ENCODE measurements at regions of chr19 and their contacts with region 1.

Region 1: DNA sequence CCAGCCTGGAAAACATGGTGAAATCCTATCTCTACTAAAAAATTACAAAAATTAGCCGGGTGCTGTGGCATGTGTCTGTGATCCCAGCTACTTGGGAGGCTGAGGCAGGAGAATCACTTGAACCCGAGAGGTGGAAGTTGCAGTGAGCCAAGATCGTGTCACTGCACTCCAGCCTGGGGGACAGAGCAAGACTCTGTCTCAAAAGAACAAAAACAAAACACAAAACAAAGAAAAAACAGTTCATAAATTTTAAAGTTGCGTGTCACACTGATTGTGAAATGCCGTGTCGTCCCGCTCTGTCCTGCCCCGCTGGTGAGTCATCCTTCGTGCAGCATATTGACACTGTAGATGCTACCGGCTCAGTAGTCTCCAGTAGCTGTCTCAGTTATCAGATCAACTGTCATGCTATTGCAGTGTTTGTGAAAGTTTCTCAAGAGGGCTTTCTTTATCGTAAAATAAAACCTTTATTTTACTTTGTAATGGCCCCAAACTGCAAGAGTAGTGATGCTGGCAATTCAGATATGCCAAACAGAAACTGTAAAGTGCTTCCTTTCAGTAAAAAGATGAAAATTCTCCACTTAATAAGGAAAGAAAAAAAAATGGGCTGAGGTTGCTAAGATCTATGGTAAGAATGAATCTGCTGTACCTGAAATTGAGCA is 36.4 kb upstream of the IGFL1 start:
- DNase-seq: peak; percentile 91
- H3K4me3 Mint-ChIP-seq: peak overlapping the region; percentile 30
- H3K27ac Mint-ChIP-seq: peak overlapping the region; percentile 75
- H3K4me1 Mint-ChIP-seq: peaks cover 35% of the 10 kb centered on the region
- H3K27me3 Mint-ChIP-seq: no peaks in the 10 kb centered on the region
- CTCF ChIP-seq: no peak

Region 2: DNA sequence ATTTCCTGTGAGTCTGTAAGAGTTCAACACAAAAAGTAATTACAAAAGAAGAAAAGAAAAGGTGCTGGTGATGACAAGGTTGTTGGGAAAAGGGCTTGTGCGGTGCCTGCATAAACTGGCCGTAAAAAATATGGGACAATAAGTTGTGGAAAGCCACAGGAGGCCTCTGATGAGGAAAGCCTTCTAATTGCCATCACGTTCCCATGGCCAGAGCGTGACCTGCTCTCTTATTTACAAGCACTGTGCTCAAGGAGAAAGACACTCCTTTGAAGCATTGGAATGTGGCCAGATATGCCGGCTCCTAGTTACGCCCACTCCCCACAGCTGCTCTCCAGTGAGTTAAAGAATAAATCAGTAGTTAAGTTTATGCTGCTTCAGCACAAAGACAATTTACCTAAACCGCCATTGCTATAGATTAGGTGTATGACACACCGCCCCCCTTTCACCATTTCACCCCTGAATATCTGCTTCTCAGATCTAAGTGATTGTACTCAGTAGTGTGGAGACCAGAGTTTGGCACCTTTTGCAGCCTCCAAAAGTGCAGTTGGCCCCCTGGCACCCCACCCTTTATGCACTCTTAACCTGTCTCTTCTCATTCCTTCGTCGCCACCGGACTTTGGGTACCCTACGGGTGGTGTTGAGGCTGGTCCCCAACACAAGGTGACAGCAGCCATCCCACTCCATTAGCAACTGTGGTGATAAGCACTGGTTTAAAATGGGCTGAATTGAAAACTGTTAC is 162.1 kb before region 1 on chr19:
- CTCF ChIA-PET with region 1: interaction called, 13 read pairs
- POLR2A ChIA-PET with region 1: no interaction called
- intact Hi-C with region 1: loop called (anchors 2 kb)
- DNase-seq: no peak
- H3K4me3 Mint-ChIP-seq: no peak overlapping the region
- H3K27ac Mint-ChIP-seq: no peak overlapping the region
- H3K4me1 Mint-ChIP-seq: peaks cover 6% of the 10 kb centered on the region
- H3K27me3 Mint-ChIP-seq: no peaks in the 10 kb centered on the region
- CTCF ChIP-seq: no peak

Region 3: DNA sequence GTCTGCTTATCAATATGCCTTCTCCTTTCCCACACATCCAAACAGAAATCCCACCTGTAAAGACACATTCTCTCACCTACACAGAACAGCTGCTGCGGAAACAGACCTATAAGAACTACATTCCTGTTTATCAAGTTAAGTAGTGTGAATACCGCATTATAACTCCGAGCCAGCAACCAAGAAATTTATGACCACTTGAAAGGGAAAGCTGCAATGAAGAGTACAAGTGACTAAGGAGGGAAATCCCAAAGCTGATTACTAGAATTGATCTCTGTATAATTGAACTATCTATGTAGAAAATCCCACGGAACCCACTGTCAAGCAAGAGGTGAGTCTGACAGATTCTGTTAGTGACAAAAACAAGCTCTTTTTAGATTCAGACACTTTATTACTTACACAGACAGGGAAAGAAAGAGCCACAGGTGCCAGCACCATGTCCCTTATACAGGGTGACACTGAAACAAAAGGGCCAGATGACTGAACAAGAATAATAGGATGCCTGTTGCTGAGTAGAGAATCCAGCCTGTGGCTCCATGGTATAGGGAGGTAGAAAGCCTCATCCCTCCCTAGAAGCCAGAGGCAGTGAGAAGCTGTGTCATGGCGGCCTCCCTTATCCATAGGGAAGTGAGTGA is 150.8 kb before region 1 on chr19:
- CTCF ChIA-PET with region 1: no interaction called
- POLR2A ChIA-PET with region 1: no interaction called
- intact Hi-C with region 1: no loop called
- DNase-seq: no peak
- H3K4me3 Mint-ChIP-seq: no peak overlapping the region
- H3K27ac Mint-ChIP-seq: no peak overlapping the region
- H3K4me1 Mint-ChIP-seq: peaks cover 12% of the 10 kb centered on the region
- H3K27me3 Mint-ChIP-seq: peaks cover 50% of the 10 kb centered on the region
- CTCF ChIP-seq: no peak

Region 4: DNA sequence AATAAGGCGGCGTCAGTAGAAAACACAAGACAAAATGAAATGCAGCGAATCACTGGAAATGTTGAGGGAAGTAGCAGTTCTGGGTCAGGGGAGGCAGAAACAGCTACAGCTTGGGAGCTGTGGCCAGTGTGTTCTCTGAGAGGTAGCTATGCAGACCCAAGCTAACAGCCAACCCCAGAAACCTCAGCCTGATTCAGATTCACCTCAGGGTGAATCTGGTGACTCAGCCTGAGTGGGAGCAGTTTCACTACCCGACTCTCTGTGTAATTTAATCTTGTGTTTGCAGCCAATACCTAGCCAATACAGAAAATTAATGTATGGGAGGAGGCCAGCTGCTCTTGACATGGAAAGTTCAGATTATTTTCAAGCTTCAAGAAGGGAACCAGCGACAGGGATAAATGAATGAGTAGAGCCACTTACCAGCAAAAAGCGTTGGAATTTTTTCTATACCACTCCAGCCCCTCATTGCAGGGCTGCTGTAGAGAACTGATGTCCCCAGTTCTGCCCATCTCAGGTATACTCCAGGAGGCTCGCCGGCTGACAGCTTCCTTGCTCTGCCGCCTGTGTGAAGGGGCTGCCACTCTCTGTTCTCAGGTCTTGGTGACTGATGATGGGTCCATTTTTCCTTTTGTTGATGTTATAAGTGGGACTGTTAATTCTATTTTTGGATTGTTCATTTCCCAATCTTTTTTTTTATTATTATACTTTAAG is 77.6 kb before region 1 on chr19:
- CTCF ChIA-PET with region 1: interaction called, 3 read pairs
- POLR2A ChIA-PET with region 1: interaction called, 10 read pairs
- intact Hi-C with region 1: no loop called
- DNase-seq: peak; percentile 94
- H3K4me3 Mint-ChIP-seq: peak overlapping the region; percentile 19
- H3K27ac Mint-ChIP-seq: peak overlapping the region; percentile 82
- H3K4me1 Mint-ChIP-seq: peaks cover 22% of the 10 kb centered on the region
- H3K27me3 Mint-ChIP-seq: no peaks in the 10 kb centered on the region
- CTCF ChIP-seq: no peak

Region 5: GRCh38 chr19:46206158-46206557 is 13.0 kb after region 1 on chr19:
- CTCF ChIA-PET with region 1: interaction called, 13 read pairs
- POLR2A ChIA-PET with region 1: interaction called, 32 read pairs
- intact Hi-C with region 1: no loop called
- DNase-seq: peak; percentile 96
- H3K4me3 Mint-ChIP-seq: no peak overlapping the region
- H3K27ac Mint-ChIP-seq: peak overlapping the region; percentile 40
- H3K4me1 Mint-ChIP-seq: peaks cover 55% of the 10 kb centered on the region
- H3K27me3 Mint-ChIP-seq: no peaks in the 10 kb centered on the region
- CTCF ChIP-seq: no peak

Region 6: DNA sequence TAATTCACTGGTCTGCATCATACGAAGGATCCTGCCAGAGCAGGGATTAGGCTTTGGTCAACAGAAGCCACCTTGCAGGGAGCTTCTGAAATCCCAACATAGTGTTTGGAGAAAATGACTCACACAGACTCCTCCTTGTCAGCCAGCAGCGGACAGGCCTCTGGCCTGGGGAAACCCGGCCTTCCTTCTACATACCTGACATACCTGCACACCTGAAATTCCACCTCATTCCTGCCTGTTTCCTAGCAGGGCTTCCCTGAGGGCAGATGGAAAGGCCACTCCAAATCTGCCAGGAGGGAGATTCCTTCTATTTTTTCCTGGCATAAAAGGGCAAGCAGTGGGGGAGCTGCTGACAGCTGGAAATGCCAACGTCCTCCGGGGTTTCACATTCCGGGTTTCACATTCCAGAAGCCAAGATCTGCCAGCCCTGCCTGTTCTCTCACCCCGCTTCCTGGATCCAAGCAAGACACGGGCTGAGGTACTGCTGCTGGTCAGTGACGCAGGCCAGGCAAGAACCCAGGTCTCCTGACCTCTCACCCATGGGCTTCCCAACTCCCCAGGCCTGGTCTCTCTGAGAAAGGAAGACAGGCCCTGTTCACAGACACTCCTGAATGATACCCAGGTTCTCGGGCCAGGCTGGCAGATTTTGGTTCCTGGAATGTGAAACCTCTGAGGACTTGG is 18.2 kb after region 1 on chr19:
- CTCF ChIA-PET with region 1: interaction called, 13 read pairs
- POLR2A ChIA-PET with region 1: interaction called, 32 read pairs
- intact Hi-C with region 1: no loop called
- DNase-seq: peak; percentile 89
- H3K4me3 Mint-ChIP-seq: peak overlapping the region; percentile 19
- H3K27ac Mint-ChIP-seq: peak overlapping the region; percentile 89
- H3K4me1 Mint-ChIP-seq: peaks cover 37% of the 10 kb centered on the region
- H3K27me3 Mint-ChIP-seq: peaks cover 5% of the 10 kb centered on the region
- CTCF ChIP-seq: no peak

Region 7: DNA sequence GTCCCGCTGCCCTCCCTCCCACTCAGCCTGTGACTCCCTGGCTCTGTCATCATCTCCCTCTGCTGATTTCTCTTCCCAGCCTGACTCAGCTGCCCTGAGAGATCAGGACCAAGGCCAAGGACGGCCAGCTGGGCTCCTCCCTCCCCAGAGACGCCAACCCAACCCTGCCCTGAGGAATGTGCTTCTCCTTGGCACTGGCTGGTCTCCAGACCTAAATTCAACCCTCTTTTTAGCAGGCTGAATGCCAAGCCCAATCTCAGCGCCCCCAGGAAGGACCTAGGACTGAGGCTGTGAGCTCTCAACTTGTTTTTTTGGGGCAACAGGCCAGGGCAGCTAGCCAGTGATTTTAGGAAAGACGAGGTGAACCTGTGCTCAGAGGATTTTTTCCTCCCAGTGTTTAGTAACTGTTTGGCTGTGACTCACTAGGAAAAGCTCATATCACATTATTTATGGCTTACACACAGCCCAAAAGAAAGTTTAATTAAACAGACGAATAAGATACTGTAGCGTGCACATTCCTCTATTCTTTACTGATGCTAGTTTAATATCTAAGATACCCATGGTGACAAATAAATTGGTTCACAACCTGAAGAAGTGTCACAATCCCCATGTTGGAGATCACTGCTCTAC is 29.0 kb after region 1 on chr19:
- CTCF ChIA-PET with region 1: interaction called, 3 read pairs
- POLR2A ChIA-PET with region 1: interaction called, 13 read pairs
- intact Hi-C with region 1: no loop called
- DNase-seq: peak; percentile 98
- H3K4me3 Mint-ChIP-seq: peak overlapping the region; percentile 47
- H3K27ac Mint-ChIP-seq: peak overlapping the region; percentile 51
- H3K4me1 Mint-ChIP-seq: peaks cover 33% of the 10 kb centered on the region
- H3K27me3 Mint-ChIP-seq: peaks cover 24% of the 10 kb centered on the region
- CTCF ChIP-seq: no peak

Region 8: GRCh38 chr19:46239193-46240024 is 46.3 kb after region 1 on chr19:
- CTCF ChIA-PET with region 1: no interaction called
- POLR2A ChIA-PET with region 1: no interaction called
- intact Hi-C with region 1: no loop called
- DNase-seq: no peak
- H3K4me3 Mint-ChIP-seq: no peak overlapping the region
- H3K27ac Mint-ChIP-seq: no peak overlapping the region
- H3K4me1 Mint-ChIP-seq: no peaks in the 10 kb centered on the region
- H3K27me3 Mint-ChIP-seq: peaks cover 63% of the 10 kb centered on the region
- CTCF ChIP-seq: no peak

Region 9: DNA sequence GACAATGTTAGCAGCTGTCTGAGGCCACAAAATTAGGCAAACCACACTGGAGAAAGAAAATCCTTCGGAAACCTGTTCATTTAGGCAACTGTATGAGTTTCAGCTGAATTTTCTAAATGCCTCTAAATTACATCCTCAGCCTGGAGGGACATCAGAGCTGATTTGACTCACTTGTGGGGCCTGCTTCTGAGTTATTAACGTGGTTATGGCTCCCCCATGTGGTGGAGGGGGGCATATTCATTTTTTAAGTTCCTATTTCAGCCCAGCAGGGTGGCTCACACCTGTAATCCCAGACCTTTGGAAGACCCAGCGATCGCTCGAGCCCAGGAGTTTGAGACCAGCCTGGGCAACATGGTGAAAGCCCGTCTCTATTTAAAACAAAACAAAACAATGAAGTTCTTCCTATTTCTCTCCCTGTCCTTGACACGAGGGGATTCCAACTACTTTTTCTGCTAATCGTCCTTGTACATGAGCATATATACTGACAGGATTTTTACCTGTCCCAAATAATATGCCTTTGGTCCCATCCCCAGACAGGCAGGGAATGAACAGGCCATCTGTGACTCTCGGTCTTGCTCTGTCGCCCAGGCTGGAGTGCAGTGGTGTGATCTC is 72.2 kb after region 1 on chr19:
- CTCF ChIA-PET with region 1: interaction called, 88 read pairs
- POLR2A ChIA-PET with region 1: interaction called, 3 read pairs
- intact Hi-C with region 1: loop called (anchors 1 kb)
- DNase-seq: peak; percentile 90
- H3K4me3 Mint-ChIP-seq: no peak overlapping the region
- H3K27ac Mint-ChIP-seq: no peak overlapping the region
- H3K4me1 Mint-ChIP-seq: peaks cover 11% of the 10 kb centered on the region
- H3K27me3 Mint-ChIP-seq: no peaks in the 10 kb centered on the region
- CTCF ChIP-seq: peak; percentile 93